ENCODE measurements at regions of chr15 and their contacts with region 1.

Region 1: DNA sequence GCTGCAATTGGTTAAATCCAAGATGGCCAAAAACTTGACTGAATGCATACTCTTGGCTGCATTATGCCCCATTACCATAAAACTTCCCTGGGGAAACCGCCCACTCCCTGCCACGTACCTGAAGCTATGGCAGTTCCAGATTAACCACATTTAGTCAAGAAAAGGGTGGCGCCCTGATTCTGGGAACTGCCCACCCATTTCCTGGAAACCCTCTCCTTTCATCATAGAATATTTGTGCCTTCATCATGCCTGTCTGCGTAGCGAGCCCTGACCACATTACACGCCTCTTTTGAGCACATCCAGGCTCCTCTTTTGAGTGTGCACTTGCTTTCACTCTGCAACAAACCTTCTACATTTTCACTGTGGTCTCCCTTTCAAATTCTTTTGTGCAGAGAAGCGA is 5.2 kb downstream of the LINS1 start:
- DNase-seq: peak; percentile 98
- H3K4me3 Mint-ChIP-seq: peak overlapping the region; percentile 90
- H3K27ac Mint-ChIP-seq: peak overlapping the region; percentile 97
- H3K4me1 Mint-ChIP-seq: peaks cover 61% of the 10 kb centered on the region
- H3K27me3 Mint-ChIP-seq: peaks cover 2% of the 10 kb centered on the region

Region 2: DNA sequence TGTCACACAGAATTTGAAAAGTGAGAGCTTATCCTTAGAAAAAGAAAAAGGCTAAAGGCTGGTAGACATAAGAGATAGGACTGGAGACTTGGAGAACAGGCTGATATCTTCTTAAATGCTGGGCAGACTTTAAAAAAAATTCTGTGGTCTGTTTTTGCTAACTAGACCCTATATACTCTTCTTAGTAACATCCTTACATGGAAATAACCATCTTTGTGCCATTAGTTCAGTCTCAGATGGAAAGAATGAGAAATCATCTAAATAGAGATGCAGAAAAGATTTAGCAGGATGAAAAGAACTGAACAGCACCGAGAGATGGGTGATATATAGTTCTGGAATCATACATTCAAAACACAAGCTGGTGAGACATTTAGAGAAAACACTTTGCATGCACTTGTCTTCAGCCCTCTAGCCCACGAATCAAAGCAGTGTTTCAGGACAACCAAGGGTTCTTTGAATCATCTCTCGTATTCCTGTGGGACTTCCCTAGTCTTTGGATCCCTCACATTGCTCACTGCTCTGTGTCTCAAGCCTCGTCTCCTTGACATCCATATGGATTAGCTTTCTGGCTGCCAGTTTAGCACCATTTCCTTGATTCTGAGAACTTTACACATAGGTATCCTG is 770.5 kb before region 1 on chr15:
- intact Hi-C with region 1: loop called (anchors 5 kb)
- DNase-seq: no peak
- H3K4me3 Mint-ChIP-seq: peak overlapping the region; percentile 43
- H3K27ac Mint-ChIP-seq: peak overlapping the region; percentile 92
- H3K4me1 Mint-ChIP-seq: peaks cover 26% of the 10 kb centered on the region
- H3K27me3 Mint-ChIP-seq: no peaks in the 10 kb centered on the region

Region 3: GRCh38 chr15:100438570-100438969 is 158.2 kb before region 1 on chr15:
- intact Hi-C with region 1: no loop called
- DNase-seq: no peak
- H3K4me3 Mint-ChIP-seq: no peak overlapping the region
- H3K27ac Mint-ChIP-seq: no peak overlapping the region
- H3K4me1 Mint-ChIP-seq: no peaks in the 10 kb centered on the region
- H3K27me3 Mint-ChIP-seq: no peaks in the 10 kb centered on the region

Region 4: GRCh38 chr15:100572362-100572983 is 24.3 kb before region 1 on chr15:
- intact Hi-C with region 1: loop called (anchors 2 kb)
- DNase-seq: no peak
- H3K4me3 Mint-ChIP-seq: peak overlapping the region; percentile 78
- H3K27ac Mint-ChIP-seq: no peak overlapping the region
- H3K4me1 Mint-ChIP-seq: peaks cover 49% of the 10 kb centered on the region
- H3K27me3 Mint-ChIP-seq: no peaks in the 10 kb centered on the region

Region 5: DNA sequence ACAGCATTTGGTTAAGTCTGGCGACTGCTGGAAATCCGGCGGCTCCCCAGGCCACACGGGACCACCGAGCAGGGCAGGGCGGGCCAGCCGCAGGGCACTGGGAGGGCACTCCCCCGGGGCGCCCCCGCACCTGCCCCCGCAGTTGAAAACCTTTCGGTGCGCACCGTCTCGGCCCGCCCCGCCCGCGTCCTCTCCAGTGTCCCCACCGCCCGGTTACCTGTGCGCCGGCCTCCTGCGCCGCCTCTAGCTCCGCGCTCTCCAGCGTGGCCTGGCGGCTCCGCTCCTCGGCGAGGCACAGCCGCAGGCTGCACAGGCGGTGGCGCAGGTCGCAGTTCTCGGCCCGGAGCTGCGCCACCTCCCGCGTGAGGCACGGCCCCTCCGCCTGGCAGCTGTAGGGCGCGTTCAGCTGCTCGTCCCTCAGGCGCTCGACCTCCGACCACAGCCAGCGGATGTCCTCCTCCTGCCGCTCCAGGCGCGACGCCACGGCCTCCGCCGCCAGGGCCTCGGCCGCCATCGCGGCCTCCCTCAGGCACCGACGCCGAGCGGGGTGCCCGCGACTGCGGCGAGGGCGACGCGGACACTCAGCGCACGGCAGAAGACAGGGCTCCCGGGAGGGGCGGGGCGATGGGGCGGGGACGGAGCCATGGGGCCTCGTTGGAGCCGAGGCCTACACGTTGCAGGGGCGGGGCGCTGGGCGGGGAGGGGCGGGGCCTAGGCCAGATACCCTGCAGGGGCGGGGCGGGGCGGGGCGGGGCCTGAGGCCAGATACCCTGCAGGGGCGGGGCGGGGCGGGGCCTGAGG is 1127.3 kb after region 1 on chr15 and contains the start of gene TARS3:
- intact Hi-C with region 1: loop called (anchors 5 kb)
- DNase-seq: peak; percentile 95
- H3K4me3 Mint-ChIP-seq: peak within 1 kb of the TSS; percentile 87
- H3K27ac Mint-ChIP-seq: peak within 1 kb of the TSS; percentile 95
- H3K4me1 Mint-ChIP-seq: peaks cover 14% of the 10 kb centered on the region
- H3K27me3 Mint-ChIP-seq: no peaks in the 10 kb centered on the region
- total RNA-seq, gene TARS3: 11.5 and 13.2 TPM in 2 replicates

Measured in activated CD4-positive, alpha-beta T cell treated with anti-CD3 and anti-CD28 coated beads, Interleukin-2, amount 10 ng/mL, durations not matched to agents 24 days and 14 days (primary cell).